ENCODE measurements at regions of chr3 and their contacts with region 1.

Region 1: GRCh38 chr3:99418209-99418635 is 220.2 kb upstream of the COL8A1 start:
- DNase-seq: no peak
- H3K4me3 ChIP-seq: no peak overlapping the region
- H3K27ac ChIP-seq: no peak overlapping the region
- H3K4me1 ChIP-seq: no peaks in the 10 kb centered on the region
- H3K27me3 ChIP-seq: no peaks in the 10 kb centered on the region
- CTCF ChIP-seq: no peak

Region 2: DNA sequence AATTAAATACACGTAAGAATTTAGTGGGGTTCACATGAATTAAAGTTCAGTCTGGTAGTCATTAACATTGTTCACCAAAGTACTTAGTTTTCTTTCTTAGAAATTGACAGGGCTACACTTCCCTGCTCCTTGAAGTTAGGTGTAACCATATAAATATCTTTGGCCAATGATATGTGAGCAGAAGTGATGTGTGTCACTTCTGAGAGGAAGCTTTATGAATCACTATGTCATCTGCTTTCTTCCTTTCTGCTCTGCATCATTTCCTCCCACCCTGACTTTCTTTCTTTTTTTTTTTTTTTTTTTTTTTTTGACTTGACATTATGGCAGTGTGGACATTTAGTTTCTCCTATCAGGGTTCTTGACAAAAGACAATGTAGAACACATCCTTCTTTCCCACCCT is 64.0 kb after region 1 on chr3:
- CTCF ChIA-PET with region 1: interaction called, 14 read pairs
- POLR2A ChIA-PET with region 1: no interaction called
- intact Hi-C with region 1: no loop called
- DNase-seq: no peak
- H3K4me3 ChIP-seq: no peak overlapping the region
- H3K27ac ChIP-seq: no peak overlapping the region
- H3K4me1 ChIP-seq: no peaks in the 10 kb centered on the region
- H3K27me3 ChIP-seq: no peaks in the 10 kb centered on the region
- CTCF ChIP-seq: no peak

Region 3: DNA sequence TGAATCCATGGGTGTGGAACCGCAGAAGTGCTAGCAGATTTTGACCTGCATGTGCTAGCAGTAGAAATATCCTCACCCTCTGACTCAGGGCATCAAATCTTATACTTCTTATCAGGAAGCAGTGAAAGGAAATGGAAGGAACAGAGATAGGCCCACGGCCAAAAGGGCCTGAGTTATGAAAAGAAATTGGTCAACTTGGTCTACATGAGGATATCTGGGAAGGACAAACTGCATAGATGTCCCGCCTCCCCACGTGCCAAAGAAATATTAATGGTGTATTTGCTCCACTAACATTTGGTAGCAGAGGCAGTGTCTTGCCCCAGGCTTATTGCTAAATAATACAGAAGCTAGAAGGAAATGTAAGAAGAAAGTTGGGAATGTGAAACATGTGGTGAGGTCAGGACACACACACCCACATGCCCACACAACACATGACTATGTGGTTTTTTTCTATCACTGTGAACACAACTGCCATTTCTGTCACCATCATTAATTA is 126.6 kb after region 1 on chr3:
- CTCF ChIA-PET with region 1: no interaction called
- POLR2A ChIA-PET with region 1: no interaction called
- intact Hi-C with region 1: no loop called
- DNase-seq: peak in 1 of 2 experiments; percentile 19
- H3K4me3 ChIP-seq: no peak overlapping the region
- H3K27ac ChIP-seq: no peak overlapping the region
- H3K4me1 ChIP-seq: peaks cover 28% of the 10 kb centered on the region
- H3K27me3 ChIP-seq: no peaks in the 10 kb centered on the region
- CTCF ChIP-seq: no peak